Activated CD4-positive, alpha-beta T cell treated with anti-CD3 and anti-CD28 coated beads for 36 hours (primary cell): ENCODE measurements at regions of chr6 and their contacts with region 1.

Region 1: DNA sequence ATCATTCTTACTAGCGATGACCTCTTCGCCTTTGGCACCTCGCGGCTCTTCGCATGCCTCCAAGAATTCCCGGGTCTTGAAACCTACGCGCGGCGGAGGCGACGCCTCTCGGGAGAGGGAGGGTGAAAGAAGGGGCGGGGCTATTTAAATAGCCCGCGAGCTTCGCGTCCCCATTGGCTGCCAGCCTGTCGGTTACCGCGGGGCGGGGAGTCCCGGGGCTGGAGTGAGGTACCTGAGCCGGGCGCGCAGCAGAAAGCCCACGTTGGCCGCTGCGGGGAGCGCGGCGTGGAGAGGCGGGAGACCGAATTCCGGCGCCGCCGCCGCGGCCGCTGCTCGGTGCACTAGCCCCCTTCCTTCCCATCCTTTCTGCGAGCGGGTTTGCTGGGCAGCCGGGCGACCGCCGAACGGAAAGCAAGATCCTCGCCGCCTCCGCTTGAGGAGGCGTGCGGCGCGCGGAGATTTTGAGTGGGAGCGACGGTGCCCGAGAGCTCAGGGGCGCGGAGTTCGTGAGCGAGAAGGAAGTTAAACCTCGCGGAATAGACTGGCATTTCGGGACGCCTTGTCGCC is at the start of gene BMP6:
- DNase-seq: peak; percentile 82
- ATAC-seq: peak; percentile 78
- H3K4me3 Mint-ChIP-seq: peak within 1 kb of the TSS; percentile 69
- H3K27ac Mint-ChIP-seq: no peak within 1 kb of the TSS
- H3K4me1 Mint-ChIP-seq: peaks cover 18% of the 10 kb centered on the region
- H3K27me3 Mint-ChIP-seq: peaks cover 60% of the 10 kb centered on the region
- total RNA-seq, gene BMP6: 0.14 to 0.27 TPM

Region 2: GRCh38 chr6:7697820-7698623 is 27.9 kb before region 1 on chr6:
- CTCF ChIA-PET with region 1: interaction called, 16 read pairs
- POLR2A ChIA-PET with region 1: no interaction called
- intact Hi-C with region 1: no loop called
- DNase-seq: peak; percentile 43
- ATAC-seq: peak; percentile 85
- H3K4me3 Mint-ChIP-seq: no peak overlapping the region
- H3K27ac Mint-ChIP-seq: peak overlapping the region; percentile 47
- H3K4me1 Mint-ChIP-seq: peaks cover 14% of the 10 kb centered on the region
- H3K27me3 Mint-ChIP-seq: peaks cover 10% of the 10 kb centered on the region

Region 3: GRCh38 chr6:8006208-8006607 is 280.3 kb after region 1 on chr6:
- CTCF ChIA-PET with region 1: interaction called, 10 read pairs
- POLR2A ChIA-PET with region 1: no interaction called
- intact Hi-C with region 1: loop called (anchors 1 kb)
- DNase-seq: peak; percentile 14
- ATAC-seq: no peak
- H3K4me3 Mint-ChIP-seq: no peak overlapping the region
- H3K27ac Mint-ChIP-seq: no peak overlapping the region
- H3K4me1 Mint-ChIP-seq: peaks cover 6% of the 10 kb centered on the region
- H3K27me3 Mint-ChIP-seq: peaks cover 2% of the 10 kb centered on the region

Region 4: GRCh38 chr6:8219352-8219943 is 493.5 kb after region 1 on chr6:
- CTCF ChIA-PET with region 1: interaction called, 26 read pairs
- POLR2A ChIA-PET with region 1: no interaction called
- intact Hi-C with region 1: loop called (anchors 1 to 5 kb)
- DNase-seq: peak; percentile 57
- ATAC-seq: peak; percentile 39
- H3K4me3 Mint-ChIP-seq: no peak overlapping the region
- H3K27ac Mint-ChIP-seq: no peak overlapping the region
- H3K4me1 Mint-ChIP-seq: no peaks in the 10 kb centered on the region
- H3K27me3 Mint-ChIP-seq: peaks cover 5% of the 10 kb centered on the region